ENCODE measurements at regions of chr2 and their contacts with region 1.

Region 1: DNA sequence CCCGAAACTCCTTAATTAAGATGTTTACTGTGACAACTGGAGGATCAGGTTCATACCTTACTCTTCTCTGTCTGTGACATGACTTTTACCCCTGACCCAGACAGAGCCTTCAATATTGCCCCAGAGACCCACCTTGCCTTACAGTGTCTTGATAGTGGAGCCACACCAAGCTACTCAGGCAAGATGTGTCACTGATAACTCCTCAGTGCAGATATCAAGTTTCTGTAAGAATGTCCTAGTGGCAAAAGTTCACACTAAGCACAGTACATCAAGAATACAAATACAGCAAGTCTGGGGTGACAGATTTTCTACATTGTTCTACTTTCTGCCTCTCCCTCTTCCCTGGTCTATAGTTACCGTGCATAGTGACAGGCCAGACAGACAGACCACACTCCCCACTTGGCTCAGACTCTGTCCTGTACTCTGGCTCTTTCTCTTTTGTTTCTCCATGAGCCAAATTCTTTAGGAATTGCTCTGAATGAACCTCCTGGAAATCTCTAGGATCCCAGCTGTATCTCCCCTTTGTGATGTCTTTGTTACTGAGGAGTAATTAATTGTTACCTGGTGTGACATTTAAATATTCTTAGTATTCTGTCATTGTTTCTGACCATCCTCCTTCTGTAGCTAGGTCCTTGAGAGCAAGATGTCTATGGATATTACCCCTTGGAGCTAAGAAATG is 24.1 kb upstream of the APOB start:
- DNase-seq: no peak
- ATAC-seq: no peak
- H3K4me3 ChIP-seq: no peak overlapping the region
- H3K27ac ChIP-seq: no peak overlapping the region
- H3K4me1 ChIP-seq: no peaks in the 10 kb centered on the region
- CTCF ChIP-seq: no peak
- EP300 ChIP-seq: no peak
- POLR2A ChIP-seq: no peak
- RAD21 ChIP-seq: no peak

Region 2: DNA sequence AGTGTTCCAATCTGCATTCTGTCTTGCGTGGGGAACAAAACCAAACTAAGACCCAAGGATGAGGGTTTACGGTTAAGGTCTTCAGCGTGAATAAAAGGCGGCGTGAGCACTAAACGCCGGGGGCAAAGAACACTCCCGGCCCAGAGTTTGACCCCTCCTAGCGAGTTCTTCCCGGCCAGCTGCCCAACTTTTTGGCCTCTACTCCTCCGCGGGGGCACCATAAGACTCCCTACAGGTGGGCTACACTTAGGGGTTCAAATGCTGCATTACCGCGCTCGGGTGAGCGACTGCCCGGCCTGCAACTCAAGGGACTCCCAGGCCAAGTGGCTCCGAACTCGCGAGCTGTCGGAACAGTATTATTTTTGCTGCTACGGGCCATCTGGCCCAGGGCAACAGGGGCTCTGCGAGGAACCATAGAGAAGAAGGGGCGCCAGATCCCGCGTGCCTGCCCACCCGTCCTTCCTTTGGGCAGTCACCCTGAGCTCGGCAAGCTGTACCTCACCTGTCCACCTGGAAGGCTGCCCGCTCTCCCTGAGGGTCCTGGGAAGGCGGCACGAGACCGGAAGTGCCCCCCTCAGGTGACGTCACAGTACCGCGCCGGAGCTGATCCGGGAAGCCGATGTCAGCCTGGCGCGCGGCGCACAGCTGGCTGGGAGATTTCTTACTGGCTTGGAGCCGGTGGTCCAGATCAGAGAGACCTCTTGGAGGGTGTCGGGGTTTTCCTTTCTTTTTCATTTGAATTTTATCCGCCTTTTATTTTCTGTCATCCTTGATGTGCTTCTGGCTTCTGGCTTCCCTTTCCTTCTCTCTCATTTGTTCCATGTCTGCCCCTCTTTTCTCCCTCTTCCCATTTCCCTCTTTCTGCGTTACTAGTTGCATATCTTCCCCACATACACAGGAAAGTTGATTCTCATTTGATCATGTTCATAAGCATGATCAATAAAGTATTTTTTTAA is 245.2 kb before region 1 on chr2 and contains the start of gene LDAH:
- CTCF ChIA-PET with region 1: no interaction called
- POLR2A ChIA-PET with region 1: interaction called, 10 read pairs
- DNase-seq: peak; percentile 91 to 93
- ATAC-seq: peak; percentile 92 to 94
- H3K4me3 ChIP-seq: peak within 1 kb of the TSS; percentile 90
- H3K27ac ChIP-seq: peak within 1 kb of the TSS; percentile 91 to 93
- H3K4me1 ChIP-seq: no peaks in the 10 kb centered on the region
- CTCF ChIP-seq: no peak
- EP300 ChIP-seq: no peak
- POLR2A ChIP-seq: peak; percentile 78
- RAD21 ChIP-seq: no peak
- polyA plus RNA-seq, gene LDAH: 42.4 and 53.6 TPM in 2 replicates

Measured in A549 (cell line).